Transverse colon (tissue), 4 donors: ENCODE measurements at regions of chr6 and their contacts with region 1.

Region 1: GRCh38 chr6:30672445-30673253 is at the start of gene DHX16:
- DNase-seq: peak; percentile 97
- H3K4me3 ChIP-seq: peak within 1 kb of the TSS; percentile 86 to 98 (median 92)
- H3K27ac ChIP-seq: peak within 1 kb of the TSS; percentile 84 to 93 (median 90)
- H3K4me1 ChIP-seq: peaks cover 6 to 21% (median 16%) of the 10 kb centered on the region in 4 donors
- H3K27me3 ChIP-seq: no peaks in the 10 kb centered on the region
- CTCF ChIP-seq: peak; percentile 79 to 94 (median 88)
- EP300 ChIP-seq: no peak
- POLR2A ChIP-seq: peak; percentile 65
- total RNA-seq, gene DHX16: 37.8 to 144 (median 41.3) TPM

Region 2: DNA sequence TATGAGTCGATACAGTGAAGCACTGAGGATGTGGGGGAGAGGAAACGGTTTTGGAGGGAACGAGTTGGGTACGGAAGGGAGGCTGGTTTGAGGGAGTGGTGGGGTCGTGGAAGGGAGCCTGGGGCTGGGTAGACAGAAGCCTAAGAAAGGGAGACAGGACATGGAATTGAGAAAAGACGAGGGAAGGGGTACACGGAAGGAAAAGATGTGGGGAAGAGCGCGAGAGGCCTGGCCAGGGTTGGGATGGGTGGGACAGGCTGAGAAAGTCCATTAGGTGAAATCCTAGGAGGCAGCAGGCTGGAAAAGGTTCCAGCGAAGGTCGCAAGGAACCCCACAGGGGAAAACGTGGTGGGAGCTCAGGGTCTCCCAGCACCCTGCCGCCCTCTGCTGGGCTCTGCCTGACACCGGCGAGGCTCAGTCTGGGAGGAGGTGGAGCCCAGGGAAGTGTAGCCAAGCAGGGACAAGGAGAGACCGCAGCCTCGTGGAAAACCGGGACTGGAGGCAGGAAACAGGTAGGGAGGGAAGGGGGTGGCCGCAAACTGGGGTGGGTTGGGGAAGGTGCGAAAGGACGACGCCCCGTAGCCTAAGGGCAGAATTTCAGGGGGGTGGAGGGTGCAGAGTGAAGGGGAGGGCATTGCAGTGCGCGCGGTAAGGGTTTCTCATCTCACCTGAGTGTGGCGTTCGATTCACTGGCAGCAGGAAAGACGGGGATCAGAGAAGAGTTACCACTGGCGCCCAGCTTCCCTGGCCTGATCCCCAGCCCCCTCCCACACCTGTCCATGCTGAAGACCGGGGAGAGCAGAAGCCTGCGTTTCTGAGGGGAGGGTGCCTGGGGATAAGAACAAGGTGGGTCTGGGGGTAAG is 1044.0 kb before region 1 on chr6:
- in situ Hi-C with region 1: no loop called
- intact Hi-C with region 1: no loop called
- DNase-seq: peak; percentile 77
- H3K4me3 ChIP-seq: peak overlapping the region; percentile 35 to 56 (median 40)
- H3K27ac ChIP-seq: peak overlapping the region; percentile 53 to 86 (median 78)
- H3K4me1 ChIP-seq: peaks cover 5 to 35% (median 26%) of the 10 kb centered on the region in 4 donors
- H3K27me3 ChIP-seq: peaks cover 34% of the 10 kb centered on the region
- CTCF ChIP-seq: peak; percentile 35 to 61 (median 55)
- EP300 ChIP-seq: no peak
- POLR2A ChIP-seq: no peak

Region 3: DNA sequence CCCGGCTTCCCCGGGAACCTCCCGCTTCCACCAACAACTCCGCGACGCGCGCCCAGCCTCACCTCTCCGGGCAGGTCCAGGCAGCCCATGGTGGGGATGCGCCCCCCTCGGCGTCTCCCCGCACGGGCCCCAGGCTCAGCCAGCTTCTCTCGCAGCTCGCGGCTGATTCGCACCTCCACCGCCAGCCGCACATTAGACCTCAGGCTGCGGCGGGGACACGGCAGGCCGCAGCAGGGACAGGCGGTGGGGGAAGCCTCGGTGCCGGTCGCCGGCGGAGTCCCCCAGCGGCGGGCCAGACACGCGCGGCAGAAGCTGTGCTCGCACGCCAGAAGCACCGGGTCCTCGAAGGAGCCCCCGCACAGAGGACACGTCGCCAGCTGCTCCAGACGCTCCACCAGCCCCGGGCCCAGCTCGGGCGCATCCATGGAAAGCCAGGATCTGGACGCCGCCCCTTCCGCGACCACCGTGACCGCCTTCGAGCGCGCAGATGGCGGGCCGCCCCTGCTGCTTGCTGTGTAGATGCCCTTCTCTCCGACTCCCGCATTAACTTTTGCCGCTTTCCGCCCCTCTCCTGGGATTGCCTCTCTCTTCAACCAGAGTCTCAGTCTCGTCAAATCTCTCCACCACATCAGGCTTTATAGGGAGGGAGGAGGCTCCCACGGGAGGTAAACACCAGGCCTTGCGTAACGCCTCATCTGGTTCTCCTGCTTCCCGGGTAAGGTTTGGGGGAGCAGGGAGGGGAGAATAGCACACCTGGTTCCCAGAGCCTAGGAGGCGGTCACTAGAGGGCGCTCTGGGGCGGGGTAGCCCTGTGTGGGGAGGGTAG is 597.3 kb before region 1 on chr6 and contains the start of gene RNF39:
- in situ Hi-C with region 1: no loop called
- intact Hi-C with region 1: no loop called
- DNase-seq: peak; percentile 42
- H3K4me3 ChIP-seq: peak within 1 kb of the TSS in 2 of 4 donors; percentile 25 to 33
- H3K27ac ChIP-seq: no peak within 1 kb of the TSS
- H3K4me1 ChIP-seq: peaks cover 12 to 35% (median 29%) of the 10 kb centered on the region in 4 donors
- H3K27me3 ChIP-seq: peaks cover 94% of the 10 kb centered on the region
- CTCF ChIP-seq: peak in 3 of 5 experiments; percentile 21 to 33 (median 29)
- EP300 ChIP-seq: no peak
- POLR2A ChIP-seq: no peak
- total RNA-seq, gene RNF39: 0.27 to 0.95 TPM in 2 of 4 donors, not detected in the others

Region 4: GRCh38 chr6:30544666-30545272 is 127.9 kb before region 1 on chr6:
- in situ Hi-C with region 1: no loop called
- intact Hi-C with region 1: no loop called
- DNase-seq: no peak
- H3K4me3 ChIP-seq: no peak overlapping the region
- H3K27ac ChIP-seq: no peak overlapping the region
- H3K4me1 ChIP-seq: peaks cover 0 to 10% (median 6%) of the 10 kb centered on the region in 4 donors
- H3K27me3 ChIP-seq: no peaks in the 10 kb centered on the region
- CTCF ChIP-seq: peak; percentile 72 to 82 (median 79)
- EP300 ChIP-seq: no peak
- POLR2A ChIP-seq: no peak

Region 5: DNA sequence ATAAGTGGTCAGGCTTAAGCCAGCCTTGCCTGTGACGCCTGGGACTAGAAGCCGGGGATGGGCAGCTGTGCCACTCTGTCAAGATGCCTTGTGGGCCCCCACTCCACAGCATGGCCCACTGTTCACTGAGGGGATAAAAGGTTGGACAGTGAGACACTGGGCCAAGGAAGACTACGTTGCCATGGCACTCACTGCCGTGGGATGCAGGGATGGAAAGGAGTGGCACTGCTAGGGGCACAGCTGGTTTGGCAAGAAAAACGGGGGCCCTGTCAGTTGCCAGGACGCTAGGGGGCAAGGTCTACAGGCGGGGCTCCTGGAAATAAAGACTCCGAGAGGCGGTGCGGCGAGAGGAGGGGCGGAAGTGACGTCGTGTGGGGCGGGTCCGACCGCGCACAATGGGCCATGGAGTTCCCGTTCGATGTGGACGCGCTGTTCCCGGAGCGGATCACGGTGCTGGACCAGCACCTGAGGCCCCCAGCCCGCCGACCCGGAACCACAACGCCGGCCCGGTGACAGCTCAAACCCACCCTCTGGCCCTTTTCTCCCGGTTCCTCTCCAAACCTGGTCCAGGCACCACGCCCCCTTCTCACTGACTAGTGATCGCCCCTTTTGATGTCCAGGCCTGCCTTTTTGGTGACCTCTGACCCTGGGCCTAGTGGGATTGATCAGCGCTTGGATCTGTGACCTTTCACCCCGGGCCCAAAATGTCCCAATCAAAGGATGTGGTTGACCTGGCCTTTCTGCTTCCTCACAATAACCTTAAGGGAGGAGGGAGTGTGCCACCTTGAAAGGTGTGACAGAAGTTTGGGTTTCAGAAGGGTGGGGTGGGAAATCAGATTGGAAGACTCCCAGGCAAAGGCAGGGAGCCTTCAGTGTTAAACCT is 45.9 kb before region 1 on chr6 and contains the start of gene ATAT1:
- in situ Hi-C with region 1: loop called in 1 of 4 experiments (anchors 10 kb)
- intact Hi-C with region 1: no loop called
- DNase-seq: peak; percentile 96
- H3K4me3 ChIP-seq: peak within 1 kb of the TSS; percentile 38 to 73 (median 44)
- H3K27ac ChIP-seq: peak within 1 kb of the TSS; percentile 84 to 94 (median 94)
- H3K4me1 ChIP-seq: peaks cover 12 to 17% (median 15%) of the 10 kb centered on the region in 4 donors
- H3K27me3 ChIP-seq: no peaks in the 10 kb centered on the region
- CTCF ChIP-seq: peak; percentile 20 to 55 (median 25)
- EP300 ChIP-seq: no peak
- POLR2A ChIP-seq: peak; percentile 83
- total RNA-seq, gene ATAT1: 10.6 to 174 (median 22.2) TPM

Region 6: GRCh38 chr6:30690403-30691207 is 18.0 kb after region 1 on chr6 and contains the start of gene NRM:
- in situ Hi-C with region 1: no loop called
- intact Hi-C with region 1: no loop called
- DNase-seq: peak; percentile 90
- H3K4me3 ChIP-seq: peak within 1 kb of the TSS; percentile 36 to 82 (median 59)
- H3K27ac ChIP-seq: peak within 1 kb of the TSS; percentile 93 to 99 (median 96)
- H3K4me1 ChIP-seq: peaks cover 6 to 46% (median 28%) of the 10 kb centered on the region in 4 donors
- H3K27me3 ChIP-seq: no peaks in the 10 kb centered on the region
- CTCF ChIP-seq: no peak
- EP300 ChIP-seq: no peak
- POLR2A ChIP-seq: peak; percentile 27
- total RNA-seq, gene NRM: 2.7 to 13.8 (median 2.7) TPM in 3 of 4 donors, not detected in the other

Region 7: DNA sequence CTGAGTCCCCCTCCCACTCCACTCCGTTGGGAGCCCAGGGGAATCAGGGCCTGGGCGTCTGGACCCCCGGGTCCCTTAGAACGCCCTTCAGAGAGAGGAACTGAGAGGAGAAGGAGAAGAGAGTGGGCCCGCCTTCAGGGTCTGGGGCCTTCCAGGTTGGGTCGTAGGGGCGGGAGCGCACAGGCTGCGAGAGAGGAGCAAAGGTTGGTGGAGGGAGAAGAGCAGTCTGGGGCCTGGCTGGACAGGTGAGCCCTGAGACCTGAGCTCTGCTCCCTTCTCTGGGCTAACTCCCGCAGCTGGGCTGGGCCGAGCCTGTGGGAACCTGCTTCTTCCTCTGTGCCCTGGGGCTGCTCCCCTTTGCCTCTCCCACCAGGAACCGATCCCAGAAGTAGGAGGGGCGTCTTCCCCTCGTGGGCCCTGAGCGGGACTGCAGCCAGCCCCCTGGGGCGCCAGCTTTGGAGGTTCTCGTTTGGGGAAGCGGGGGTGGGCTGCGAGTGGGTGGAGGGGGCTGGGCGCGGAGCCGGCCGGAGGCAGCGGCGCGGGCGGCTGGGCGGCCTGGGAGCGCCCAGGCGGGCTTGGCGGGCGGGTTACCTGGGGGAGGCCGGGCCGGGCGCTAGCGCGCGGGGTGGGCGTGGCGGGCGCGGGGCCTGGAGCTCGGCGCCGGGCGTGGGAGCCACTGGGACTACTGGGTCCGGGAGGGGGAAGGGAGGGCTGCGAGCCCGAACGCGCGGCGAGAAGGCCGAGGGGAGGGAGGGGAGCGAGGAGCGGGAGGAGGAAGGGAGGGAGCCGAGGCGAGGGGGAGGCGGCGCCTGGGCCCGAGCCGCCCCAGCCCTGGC is 211.3 kb after region 1 on chr6 and contains the start of gene DDR1:
- in situ Hi-C with region 1: no loop called
- intact Hi-C with region 1: loop called (anchors 10 kb)
- DNase-seq: peak; percentile 83
- H3K4me3 ChIP-seq: peak within 1 kb of the TSS; percentile 70 to 97 (median 86)
- H3K27ac ChIP-seq: peak within 1 kb of the TSS; percentile 89 to 96 (median 94)
- H3K4me1 ChIP-seq: peaks cover 31 to 47% (median 35%) of the 10 kb centered on the region in 4 donors
- H3K27me3 ChIP-seq: no peaks in the 10 kb centered on the region
- CTCF ChIP-seq: peak in 1 of 5 experiments; percentile 15
- EP300 ChIP-seq: no peak
- POLR2A ChIP-seq: peak; percentile 73
- total RNA-seq, gene DDR1: 149 to 322 (median 230) TPM